ENCODE measurements at regions of chr19 and their contacts with region 1.

Region 1: DNA sequence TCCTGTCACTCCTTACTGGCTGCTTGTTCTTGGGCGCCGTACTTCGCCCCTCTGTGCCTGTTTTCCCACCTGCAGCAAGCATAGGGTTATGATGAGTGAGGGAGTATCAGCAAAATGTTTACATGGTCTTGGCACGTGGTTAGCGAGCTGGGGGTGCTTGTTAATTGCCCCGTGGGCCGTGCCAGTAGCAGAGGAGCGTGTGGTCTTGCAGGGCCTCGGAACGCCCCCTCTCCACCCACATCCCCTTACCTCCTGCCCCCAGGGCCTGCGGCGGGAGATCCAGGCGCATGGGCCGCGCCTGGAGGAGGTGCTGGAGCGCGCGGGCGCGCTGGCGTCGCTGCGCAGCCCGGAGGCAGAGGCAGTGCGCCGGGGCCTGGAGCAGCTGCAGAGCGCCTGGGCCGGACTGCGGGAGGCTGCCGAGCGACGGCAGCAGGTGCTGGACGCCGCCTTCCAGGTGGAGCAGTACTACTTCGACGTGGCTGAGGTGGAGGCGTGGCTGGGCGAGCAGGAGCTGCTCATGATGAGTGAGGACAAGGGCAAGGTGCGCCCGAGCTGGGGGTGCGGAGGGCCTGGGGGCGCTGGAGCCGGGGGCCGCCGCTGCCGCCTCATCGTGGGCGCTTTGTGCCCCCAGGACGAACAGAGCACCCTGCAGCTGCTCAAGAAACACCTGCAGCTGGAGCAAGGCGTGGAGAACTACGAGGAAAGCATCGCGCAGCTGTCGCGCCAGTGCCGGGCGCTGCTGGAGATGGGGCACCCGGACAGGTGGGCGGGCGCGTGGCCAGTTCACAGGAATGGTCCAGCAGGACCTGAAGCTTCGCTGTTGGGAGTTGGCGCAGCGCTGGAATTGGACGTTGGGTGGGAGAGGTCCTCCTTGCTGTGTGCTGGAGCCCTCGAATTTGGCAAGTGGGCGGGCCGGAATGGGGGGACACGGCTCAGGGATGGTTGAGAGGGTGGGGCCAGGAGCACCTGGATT is 22.5 kb upstream of the SHKBP1 start:
- DNase-seq: no peak
- H3K4me3 ChIP-seq: no peak overlapping the region
- CTCF ChIP-seq: no peak
- POLR2A ChIP-seq: no peak

Region 2: DNA sequence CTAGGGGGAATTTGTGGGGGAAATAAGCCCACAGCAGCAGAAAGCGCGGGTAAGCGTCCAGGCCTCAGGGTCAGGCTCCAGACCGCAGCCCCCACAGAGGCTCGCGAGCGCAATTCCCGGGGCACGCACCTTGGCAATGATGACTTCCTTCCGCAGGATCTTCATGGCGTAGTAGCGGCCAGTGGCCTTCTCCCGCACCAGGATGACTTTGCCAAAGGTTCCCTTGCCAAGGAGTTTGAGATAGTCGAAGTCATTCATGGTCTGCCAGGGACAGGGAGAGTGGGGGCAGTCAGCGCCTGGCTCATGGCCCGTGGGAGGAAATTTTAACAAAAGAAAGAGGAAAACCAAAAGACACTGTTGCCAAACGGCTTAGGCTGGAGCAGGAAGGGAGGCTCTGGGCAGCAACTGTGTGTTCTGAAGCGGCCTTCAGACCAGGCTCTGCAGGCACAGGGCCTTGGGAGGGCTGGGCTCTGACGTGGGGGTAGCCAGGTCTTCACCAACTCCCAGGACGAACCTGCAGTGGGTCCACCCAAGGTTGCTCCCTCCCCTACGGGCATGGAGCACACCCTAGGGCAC is 312.3 kb before region 1 on chr19:
- intact Hi-C with region 1: no loop called
- DNase-seq: no peak
- H3K4me3 ChIP-seq: no peak overlapping the region
- CTCF ChIP-seq: no peak
- POLR2A ChIP-seq: no peak

Region 3: DNA sequence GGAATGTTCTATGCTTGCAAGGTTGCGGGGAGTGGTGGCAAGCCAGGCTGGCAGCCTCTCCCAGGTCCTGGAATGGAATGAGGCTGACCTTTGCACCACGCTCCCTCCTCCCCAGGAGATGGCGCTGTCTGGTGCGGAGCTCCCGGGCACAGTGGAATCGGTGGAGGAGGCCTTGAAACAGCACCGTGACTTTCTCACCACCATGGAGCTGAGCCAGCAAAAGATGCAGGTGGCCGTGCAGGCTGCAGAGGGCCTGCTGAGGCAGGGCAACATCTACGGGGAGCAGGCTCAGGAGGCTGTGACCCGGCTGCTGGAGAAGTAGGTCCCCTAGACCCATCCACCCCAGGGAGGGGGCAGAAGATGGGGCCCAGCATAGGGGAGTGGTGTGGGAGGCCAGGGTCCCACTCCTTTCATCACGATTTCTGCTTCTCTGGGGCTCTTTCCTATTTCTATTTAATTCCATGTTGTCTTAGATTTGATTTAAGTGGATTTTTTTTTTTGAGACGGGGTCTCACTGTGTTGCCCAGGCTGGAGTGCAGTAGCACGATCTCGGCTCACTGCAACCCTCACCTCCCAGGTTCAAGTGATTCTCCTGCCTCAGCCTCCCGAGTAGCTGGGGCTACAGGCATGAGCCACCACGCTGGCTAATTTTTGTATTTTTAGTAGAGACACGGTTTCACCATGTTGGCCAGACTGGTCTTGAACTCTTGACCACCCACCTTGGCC is 30.7 kb before region 1 on chr19:
- intact Hi-C with region 1: no loop called
- DNase-seq: peak in 1 of 2 donors; percentile 26
- H3K4me3 ChIP-seq: no peak overlapping the region
- CTCF ChIP-seq: no peak
- POLR2A ChIP-seq: no peak

Region 4: GRCh38 chr19:40598121-40598917 is 44.1 kb after region 1 on chr19:
- intact Hi-C with region 1: loop called (anchors 5 kb)
- DNase-seq: peak; percentile 86 to 99
- H3K4me3 ChIP-seq: no peak overlapping the region
- CTCF ChIP-seq: peak in 1 of 3 donors; percentile 89
- POLR2A ChIP-seq: no peak